ENCODE measurements at regions of chr12 and their contacts with region 1.

Region 1: DNA sequence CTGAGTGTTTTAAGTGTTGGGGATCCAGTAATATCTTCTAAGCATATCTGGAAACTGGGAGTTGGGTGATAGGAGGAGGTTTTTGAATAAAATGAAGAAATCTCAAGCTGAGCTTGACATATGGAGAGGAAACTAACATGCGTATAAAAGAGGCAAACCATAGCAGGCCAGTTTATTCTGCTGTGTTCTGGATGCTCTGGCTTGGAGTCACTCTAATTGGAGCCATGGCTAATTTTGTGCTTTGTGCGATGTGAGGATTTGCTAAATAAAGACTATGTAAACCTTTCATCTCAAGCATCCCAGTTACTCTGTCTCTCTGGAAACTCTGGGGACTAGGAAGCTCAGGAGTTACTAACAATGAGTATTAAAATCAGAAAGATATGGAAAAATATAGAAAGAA is 66.5 kb downstream of the ATF7IP start:
- DNase-seq: no peak
- ATAC-seq: no peak
- H3K4me3 ChIP-seq: no peak overlapping the region
- H3K4me3 Mint-ChIP-seq: peak overlapping the region; percentile 11
- H3K27ac ChIP-seq: no peak overlapping the region
- H3K27ac Mint-ChIP-seq: peak overlapping the region; percentile 69
- H3K4me1 ChIP-seq: peaks cover 32% of the 10 kb centered on the region
- H3K4me1 Mint-ChIP-seq: peaks cover 73% of the 10 kb centered on the region
- H3K27me3 ChIP-seq: no peaks in the 10 kb centered on the region
- H3K27me3 Mint-ChIP-seq: no peaks in the 10 kb centered on the region
- CTCF ChIP-seq: no peak

Region 2: GRCh38 chr12:14417715-14418114 is 14.3 kb before region 1 on chr12:
- CTCF ChIA-PET with region 1: interaction called, 3 read pairs
- POLR2A ChIA-PET with region 1: interaction called, 3 read pairs
- intact Hi-C with region 1: loop called in 1 of 2 experiments (anchors 2 kb)
- DNase-seq: peak; percentile 45 to 91 (median 66)
- ATAC-seq: peak; percentile 69
- H3K4me3 ChIP-seq: peak overlapping the region in 1 of 2 experiments; percentile 25
- H3K4me3 Mint-ChIP-seq: peak overlapping the region; percentile 76
- H3K27ac ChIP-seq: peak overlapping the region; percentile 46 to 62
- H3K27ac Mint-ChIP-seq: peak overlapping the region; percentile 89
- H3K4me1 ChIP-seq: peaks cover 55% of the 10 kb centered on the region
- H3K4me1 Mint-ChIP-seq: peaks cover 64% of the 10 kb centered on the region
- H3K27me3 ChIP-seq: no peaks in the 10 kb centered on the region
- H3K27me3 Mint-ChIP-seq: no peaks in the 10 kb centered on the region
- CTCF ChIP-seq: no peak

Region 3: DNA sequence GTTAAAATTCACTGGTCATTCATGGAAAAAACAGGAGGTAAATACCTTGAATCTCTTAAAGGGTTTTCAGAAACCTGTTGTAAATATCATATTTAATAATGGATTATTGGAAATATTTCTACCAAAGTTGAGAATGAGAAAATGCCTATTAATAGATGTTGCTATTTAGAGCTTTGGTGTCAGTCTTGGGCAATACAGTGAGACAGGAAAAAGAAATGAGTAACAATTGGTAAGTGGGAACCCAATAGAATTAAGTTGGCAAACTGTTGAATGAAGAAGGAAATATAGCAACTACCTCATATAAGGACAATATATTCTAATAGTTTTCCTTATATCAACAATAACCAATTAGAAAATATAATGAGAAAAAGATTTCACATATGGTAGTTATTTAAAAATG is 11.6 kb after region 1 on chr12:
- CTCF ChIA-PET with region 1: no interaction called
- POLR2A ChIA-PET with region 1: no interaction called
- intact Hi-C with region 1: loop called in 1 of 2 experiments (anchors 1 kb)
- DNase-seq: no peak
- ATAC-seq: no peak
- H3K4me3 ChIP-seq: no peak overlapping the region
- H3K4me3 Mint-ChIP-seq: no peak overlapping the region
- H3K27ac ChIP-seq: no peak overlapping the region
- H3K27ac Mint-ChIP-seq: peak overlapping the region; percentile 76
- H3K4me1 ChIP-seq: no peaks in the 10 kb centered on the region
- H3K4me1 Mint-ChIP-seq: peaks cover 33% of the 10 kb centered on the region
- H3K27me3 ChIP-seq: no peaks in the 10 kb centered on the region
- H3K27me3 Mint-ChIP-seq: no peaks in the 10 kb centered on the region
- CTCF ChIP-seq: no peak

Region 4: GRCh38 chr12:14454098-14454907 is 22.3 kb after region 1 on chr12:
- CTCF ChIA-PET with region 1: no interaction called
- POLR2A ChIA-PET with region 1: no interaction called
- intact Hi-C with region 1: loop called in 1 of 2 experiments (anchors 2 kb)
- DNase-seq: peak in 3 of 9 experiments; percentile 13 to 70 (median 59)
- ATAC-seq: peak; percentile 91
- H3K4me3 ChIP-seq: no peak overlapping the region
- H3K4me3 Mint-ChIP-seq: no peak overlapping the region
- H3K27ac ChIP-seq: peak overlapping the region in 1 of 2 experiments; percentile 21
- H3K27ac Mint-ChIP-seq: peak overlapping the region; percentile 76
- H3K4me1 ChIP-seq: peaks cover 8% of the 10 kb centered on the region
- H3K4me1 Mint-ChIP-seq: peaks cover 53% of the 10 kb centered on the region
- H3K27me3 ChIP-seq: no peaks in the 10 kb centered on the region
- H3K27me3 Mint-ChIP-seq: no peaks in the 10 kb centered on the region
- CTCF ChIP-seq: peak; percentile 44

Region 5: DNA sequence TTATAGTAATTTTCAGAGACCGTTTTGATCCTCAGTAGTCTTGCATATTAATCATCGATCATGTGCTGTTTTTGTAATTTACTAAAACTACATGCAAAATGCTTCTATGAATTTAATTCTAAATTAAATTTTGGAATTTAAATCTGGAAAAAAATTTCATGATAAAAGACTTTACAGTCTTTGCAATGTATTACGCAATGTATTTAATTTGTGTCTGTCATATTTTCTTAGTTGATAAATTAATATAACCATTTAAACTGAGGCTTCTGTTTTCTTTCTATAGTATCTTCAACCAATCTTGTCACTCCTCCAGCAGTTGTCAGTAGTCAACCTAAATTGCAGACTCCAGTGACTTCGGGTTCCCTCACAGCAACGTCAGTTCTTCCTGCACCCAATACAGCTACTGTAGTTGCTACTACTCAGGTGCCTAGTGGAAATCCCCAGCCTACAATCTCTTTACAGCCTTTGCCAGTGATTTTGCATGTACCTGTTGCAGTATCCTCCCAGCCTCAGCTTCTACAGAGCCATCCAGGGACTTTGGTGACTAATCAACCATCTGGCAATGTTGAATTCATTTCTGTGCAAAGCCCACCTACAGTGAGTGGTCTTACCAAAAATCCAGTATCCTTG is 28.4 kb after region 1 on chr12:
- CTCF ChIA-PET with region 1: no interaction called
- POLR2A ChIA-PET with region 1: no interaction called
- intact Hi-C with region 1: loop called in 1 of 2 experiments (anchors 5 kb)
- DNase-seq: peak in 1 of 9 experiments; percentile 29
- ATAC-seq: peak; percentile 36
- H3K4me3 ChIP-seq: no peak overlapping the region
- H3K4me3 Mint-ChIP-seq: no peak overlapping the region
- H3K27ac ChIP-seq: no peak overlapping the region
- H3K27ac Mint-ChIP-seq: peak overlapping the region; percentile 37
- H3K4me1 ChIP-seq: peaks cover 7% of the 10 kb centered on the region
- H3K4me1 Mint-ChIP-seq: peaks cover 41% of the 10 kb centered on the region
- H3K27me3 ChIP-seq: no peaks in the 10 kb centered on the region
- H3K27me3 Mint-ChIP-seq: no peaks in the 10 kb centered on the region
- CTCF ChIP-seq: no peak

Region 6: DNA sequence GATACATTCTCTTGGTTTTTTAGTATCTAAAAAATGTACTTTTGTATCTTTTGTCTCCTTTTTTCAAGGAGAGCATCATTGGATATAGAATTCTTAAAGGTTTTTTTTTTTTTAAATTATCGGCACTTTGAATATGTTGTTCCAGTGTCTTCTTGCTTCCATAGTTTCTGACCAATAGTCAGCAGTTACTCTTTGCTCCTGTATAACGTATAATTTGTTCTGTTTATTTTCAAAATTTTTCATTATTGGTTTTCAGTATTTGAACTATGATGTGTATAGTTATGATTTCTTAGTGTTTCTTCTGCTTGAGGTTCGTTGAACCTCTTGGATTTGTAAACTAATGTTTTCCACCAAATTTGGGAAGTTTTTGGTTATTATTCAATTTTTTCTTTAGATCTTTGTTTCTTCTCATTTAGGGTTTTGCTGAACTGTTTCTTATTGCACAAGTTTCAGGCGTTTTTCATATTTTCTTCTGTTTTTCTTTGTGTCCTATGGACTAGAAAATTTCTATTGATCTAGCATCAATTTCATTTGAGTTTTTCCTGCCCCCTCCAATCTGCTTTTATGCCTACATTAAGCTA is 41.8 kb after region 1 on chr12:
- CTCF ChIA-PET with region 1: no interaction called
- POLR2A ChIA-PET with region 1: interaction called, 6 read pairs
- intact Hi-C with region 1: loop called (anchors 2 to 5 kb)
- DNase-seq: peak in 1 of 9 experiments; percentile 32
- ATAC-seq: no peak
- H3K4me3 ChIP-seq: no peak overlapping the region
- H3K4me3 Mint-ChIP-seq: no peak overlapping the region
- H3K27ac ChIP-seq: no peak overlapping the region
- H3K27ac Mint-ChIP-seq: no peak overlapping the region
- H3K4me1 ChIP-seq: no peaks in the 10 kb centered on the region
- H3K4me1 Mint-ChIP-seq: peaks cover 6% of the 10 kb centered on the region
- H3K27me3 ChIP-seq: no peaks in the 10 kb centered on the region
- H3K27me3 Mint-ChIP-seq: no peaks in the 10 kb centered on the region
- CTCF ChIP-seq: no peak

Region 7: DNA sequence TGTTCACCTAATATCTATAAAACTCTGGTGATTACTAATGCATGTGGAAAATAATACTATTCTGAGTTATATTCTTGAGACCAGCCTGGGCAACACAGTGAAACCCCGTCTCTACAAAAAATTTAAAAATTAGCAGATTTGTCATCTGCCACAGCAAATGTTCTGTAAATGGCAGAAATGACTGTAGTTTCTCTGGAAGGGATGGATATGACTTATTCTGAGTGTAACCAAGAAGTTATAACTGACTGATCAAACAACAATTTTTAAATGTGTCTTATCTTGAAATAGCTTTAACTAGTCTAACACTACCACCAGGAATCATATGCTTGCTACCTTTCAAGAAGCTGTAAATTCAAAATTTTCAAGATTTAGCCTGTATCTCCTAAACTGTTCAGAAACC is 47.0 kb after region 1 on chr12:
- CTCF ChIA-PET with region 1: interaction called, 3 read pairs
- POLR2A ChIA-PET with region 1: interaction called, 6 read pairs
- intact Hi-C with region 1: loop called in 1 of 2 experiments (anchors 5 kb)
- DNase-seq: no peak
- ATAC-seq: no peak
- H3K4me3 ChIP-seq: no peak overlapping the region
- H3K4me3 Mint-ChIP-seq: no peak overlapping the region
- H3K27ac ChIP-seq: no peak overlapping the region
- H3K27ac Mint-ChIP-seq: no peak overlapping the region
- H3K4me1 ChIP-seq: no peaks in the 10 kb centered on the region
- H3K4me1 Mint-ChIP-seq: peaks cover 9% of the 10 kb centered on the region
- H3K27me3 ChIP-seq: no peaks in the 10 kb centered on the region
- H3K27me3 Mint-ChIP-seq: no peaks in the 10 kb centered on the region
- CTCF ChIP-seq: no peak